ENCODE measurements at regions of chr3 and their contacts with region 1.

Region 1: DNA sequence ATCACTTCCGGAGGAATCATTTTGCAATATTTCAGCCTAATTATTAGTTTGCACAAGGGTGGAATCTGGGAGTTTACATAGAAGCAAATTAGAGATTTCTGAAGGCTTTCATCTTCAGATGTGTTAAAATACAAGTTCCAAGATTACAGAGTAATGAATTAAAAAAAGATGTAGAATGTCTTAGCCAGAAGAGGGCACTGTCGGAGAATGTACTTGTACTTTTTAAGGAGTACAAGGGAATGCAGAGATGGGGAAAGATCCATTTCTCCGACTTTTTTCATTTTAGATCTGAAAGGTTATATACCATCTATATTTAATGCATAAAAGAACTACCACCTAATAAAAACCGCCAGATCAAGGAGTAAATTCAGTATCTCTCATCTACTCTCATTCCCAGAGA is 43.1 kb upstream of the WDR5B start:
- DNase-seq: no peak
- ATAC-seq: no peak
- H3K4me3 ChIP-seq: no peak overlapping the region
- H3K4me3 Mint-ChIP-seq: no peak overlapping the region
- H3K27ac ChIP-seq: no peak overlapping the region
- H3K27ac Mint-ChIP-seq: peak overlapping the region in 5 of 9 donors; percentile 6 to 60 (median 25)
- H3K4me1 ChIP-seq: no peaks in the 10 kb centered on the region
- H3K4me1 Mint-ChIP-seq: peaks cover 0 to 9% (median 0%) of the 10 kb centered on the region in 7 donors
- H3K27me3 ChIP-seq: no peaks in the 10 kb centered on the region
- H3K27me3 Mint-ChIP-seq: no peaks in the 10 kb centered on the region

Region 2: DNA sequence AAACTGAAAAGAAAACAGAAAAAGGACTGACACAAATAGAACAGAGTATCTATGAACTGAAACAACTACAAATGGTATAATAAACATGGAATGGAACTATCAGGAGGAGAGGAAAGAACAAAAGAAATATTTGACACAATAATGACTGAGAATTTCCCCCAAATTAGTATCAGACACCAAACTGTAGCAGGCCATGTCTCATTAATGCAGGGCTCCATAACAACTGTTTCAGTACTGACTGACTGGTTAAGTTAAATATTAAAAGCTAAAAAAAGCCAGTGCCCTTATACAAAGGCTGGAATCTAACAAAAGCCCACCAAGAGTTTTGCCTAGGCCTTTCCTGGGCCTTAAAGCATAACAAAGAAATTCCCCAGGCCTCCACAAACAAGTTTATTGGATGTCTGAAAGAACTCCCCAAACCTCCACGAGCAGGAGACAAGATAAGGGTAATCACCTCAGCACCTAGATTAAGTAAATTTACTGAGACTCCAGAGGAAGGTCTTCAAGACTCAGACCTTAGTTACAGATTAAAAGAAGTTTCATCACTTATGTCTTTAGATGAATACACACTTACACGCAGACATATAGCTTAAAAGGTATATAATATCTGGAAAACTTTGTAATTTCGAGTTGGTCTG is 10.0 kb after region 1 on chr3:
- CTCF ChIA-PET with region 1: no interaction called
- POLR2A ChIA-PET with region 1: no interaction called
- intact Hi-C with region 1: loop called in 1 of 2 experiments (anchors 2 kb)
- DNase-seq: no peak
- ATAC-seq: no peak
- H3K4me3 ChIP-seq: no peak overlapping the region
- H3K4me3 Mint-ChIP-seq: peak overlapping the region in 6 of 10 donors; percentile 22 to 55 (median 42)
- H3K27ac ChIP-seq: no peak overlapping the region
- H3K27ac Mint-ChIP-seq: peak overlapping the region in 7 of 9 donors; percentile 18 to 89 (median 56)
- H3K4me1 ChIP-seq: peaks cover 7 to 25% of the 10 kb centered on the region in 2 donors
- H3K4me1 Mint-ChIP-seq: peaks cover 31 to 68% (median 63%) of the 10 kb centered on the region in 7 donors
- H3K27me3 ChIP-seq: no peaks in the 10 kb centered on the region
- H3K27me3 Mint-ChIP-seq: no peaks in the 10 kb centered on the region

Region 3: GRCh38 chr3:123586966-123587365 is 1128.0 kb after region 1 on chr3:
- CTCF ChIA-PET with region 1: no interaction called
- POLR2A ChIA-PET with region 1: no interaction called
- intact Hi-C with region 1: no loop called
- DNase-seq: no peak
- ATAC-seq: no peak
- H3K4me3 ChIP-seq: no peak overlapping the region
- H3K4me3 Mint-ChIP-seq: peak overlapping the region in 7 of 10 donors; percentile 16 to 57 (median 25)
- H3K27ac ChIP-seq: no peak overlapping the region
- H3K27ac Mint-ChIP-seq: no peak overlapping the region
- H3K4me1 ChIP-seq: peaks cover 8 to 13% of the 10 kb centered on the region in 2 donors
- H3K4me1 Mint-ChIP-seq: peaks cover 14 to 32% (median 27%) of the 10 kb centered on the region in 7 donors
- H3K27me3 ChIP-seq: no peaks in the 10 kb centered on the region
- H3K27me3 Mint-ChIP-seq: no peaks in the 10 kb centered on the region

Measured in naive thymus-derived CD4-positive, alpha-beta T cell (primary cell).